Gastrocnemius medialis (tissue), 4 donors: ENCODE measurements at regions of chr17 and their contacts with region 1.

Region 1: GRCh38 chr17:42484304-42484703 is 25.6 kb downstream of the ATP6V0A1 start:
- DNase-seq: no peak
- ATAC-seq: peak in 1 of 2 donors; percentile 18
- H3K4me3 ChIP-seq: no peak overlapping the region
- H3K27ac ChIP-seq: no peak overlapping the region
- H3K4me1 ChIP-seq: no peaks in the 10 kb centered on the region
- H3K27me3 ChIP-seq: no peaks in the 10 kb centered on the region
- CTCF ChIP-seq: no peak
- POLR2A ChIP-seq: no peak

Region 2: DNA sequence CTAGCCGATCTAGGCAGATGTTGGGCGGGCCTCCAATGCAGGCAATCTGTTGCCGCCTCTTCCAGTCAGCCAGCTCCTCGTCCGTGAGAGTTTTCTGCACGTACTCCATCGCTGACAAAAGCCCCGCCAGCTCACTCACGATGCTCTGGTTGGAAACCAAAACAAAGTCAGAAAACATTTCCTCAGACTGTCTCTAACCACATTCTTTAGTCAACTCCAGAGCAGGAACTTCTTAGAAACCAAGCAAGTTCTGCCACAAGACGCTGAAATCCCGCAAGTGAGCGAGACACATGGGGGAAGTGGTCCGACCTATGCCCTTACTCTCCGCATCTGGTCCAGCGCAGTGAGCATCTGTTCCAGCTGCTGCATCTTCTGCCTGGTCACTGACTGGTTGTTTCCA is 146.9 kb before region 1 on chr17:
- in situ Hi-C with region 1: loop called in 1 of 4 experiments (anchors 25 kb)
- intact Hi-C with region 1: no loop called
- DNase-seq: no peak
- ATAC-seq: no peak
- H3K4me3 ChIP-seq: no peak overlapping the region
- H3K27ac ChIP-seq: peak overlapping the region in 1 of 4 donors; percentile 1
- H3K4me1 ChIP-seq: no peaks in the 10 kb centered on the region
- H3K27me3 ChIP-seq: no peaks in the 10 kb centered on the region
- CTCF ChIP-seq: no peak
- POLR2A ChIP-seq: no peak

Region 3: GRCh38 chr17:42886283-42887176 is 402.2 kb after region 1 on chr17:
- in situ Hi-C with region 1: no loop called
- intact Hi-C with region 1: no loop called
- DNase-seq: no peak
- ATAC-seq: no peak
- H3K4me3 ChIP-seq: no peak overlapping the region
- H3K27ac ChIP-seq: no peak overlapping the region
- H3K4me1 ChIP-seq: peaks cover 4 to 6% of the 10 kb centered on the region in 2 donors
- H3K27me3 ChIP-seq: no peaks in the 10 kb centered on the region
- CTCF ChIP-seq: no peak
- POLR2A ChIP-seq: no peak

Region 4: DNA sequence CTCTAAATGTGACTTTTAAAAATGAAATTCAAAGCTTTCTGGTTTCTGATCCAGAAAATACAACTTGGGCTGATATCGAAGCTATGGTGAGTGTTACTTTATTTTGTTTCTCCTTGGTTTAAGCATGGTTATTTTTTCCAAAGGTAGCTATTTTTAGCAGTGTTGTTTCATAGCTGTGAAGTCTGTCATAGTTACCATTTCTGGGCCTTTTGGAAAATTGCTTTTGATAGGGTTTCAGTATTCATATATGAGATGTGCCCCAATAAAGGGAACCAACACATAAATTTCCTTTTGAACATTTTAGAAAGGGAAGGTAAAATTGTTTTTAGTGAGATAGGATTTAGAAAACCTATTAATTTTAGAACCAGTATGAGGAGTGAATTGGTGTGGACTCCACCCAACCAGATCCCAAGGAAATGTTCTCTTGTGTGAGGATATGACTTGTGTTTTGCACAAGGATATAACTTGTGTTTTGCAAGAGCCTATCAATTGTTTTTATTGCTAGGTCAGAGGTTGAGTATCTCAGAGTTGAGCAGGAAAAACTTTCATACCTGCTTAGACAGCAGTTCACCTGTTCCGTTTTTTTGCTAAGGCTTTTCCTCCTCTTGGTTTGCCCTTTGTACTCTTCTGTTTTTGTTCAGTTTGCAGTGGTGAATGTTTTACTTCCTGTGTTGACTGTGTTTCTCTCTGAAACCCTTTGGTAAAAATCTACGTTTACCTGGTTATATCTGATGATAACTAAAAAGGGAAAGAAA is 691.7 kb after region 1 on chr17:
- in situ Hi-C with region 1: loop called in 1 of 4 experiments (anchors 25 kb)
- intact Hi-C with region 1: no loop called
- DNase-seq: no peak
- ATAC-seq: no peak
- H3K4me3 ChIP-seq: no peak overlapping the region
- H3K27ac ChIP-seq: peak overlapping the region; percentile 3 to 25 (median 14)
- H3K4me1 ChIP-seq: peaks cover 42 to 47% of the 10 kb centered on the region in 2 donors
- H3K27me3 ChIP-seq: no peaks in the 10 kb centered on the region
- CTCF ChIP-seq: no peak
- POLR2A ChIP-seq: no peak